Activated CD4-positive, alpha-beta memory T cell treated with anti-CD3 and anti-CD28 coated beads for 36 hours (primary cell): ENCODE measurements at regions of chr5 and their contacts with region 1.

Region 1: DNA sequence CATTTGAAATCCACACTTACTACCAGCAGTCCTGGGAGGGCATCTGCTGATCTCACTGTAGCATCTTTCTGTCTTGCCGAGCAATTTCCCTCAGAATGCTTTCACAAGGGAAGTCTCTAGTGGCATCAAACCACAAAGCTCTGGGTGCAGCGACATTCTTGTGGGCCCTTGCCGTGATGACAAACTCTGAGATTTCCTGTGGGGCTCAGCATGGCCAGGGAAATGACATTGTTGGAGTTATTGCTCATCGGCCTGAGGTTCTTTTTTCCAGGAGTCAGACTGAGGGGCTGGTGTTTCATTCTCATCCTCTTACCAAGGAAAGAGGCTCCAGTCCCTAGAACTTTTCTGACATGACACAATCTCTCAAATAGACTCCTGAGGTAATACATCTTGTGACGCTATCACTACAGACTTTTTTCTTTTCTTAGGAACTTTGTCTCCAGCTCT is 51.4 kb downstream of the PFDN1 start:
- DNase-seq: peak; percentile 90
- H3K4me3 Mint-ChIP-seq: no peak overlapping the region
- H3K27ac Mint-ChIP-seq: peak overlapping the region; percentile 73
- H3K4me1 Mint-ChIP-seq: peaks cover 41% of the 10 kb centered on the region
- H3K27me3 Mint-ChIP-seq: no peaks in the 10 kb centered on the region

Region 2: GRCh38 chr5:140261403-140262171 is 10.0 kb after region 1 on chr5:
- CTCF ChIA-PET with region 1: interaction called, 6 read pairs
- POLR2A ChIA-PET with region 1: interaction called, 7 read pairs
- intact Hi-C with region 1: loop called (anchors 1 kb)
- DNase-seq: peak; percentile 51
- H3K4me3 Mint-ChIP-seq: no peak overlapping the region
- H3K27ac Mint-ChIP-seq: peak overlapping the region; percentile 6
- H3K4me1 Mint-ChIP-seq: peaks cover 62% of the 10 kb centered on the region
- H3K27me3 Mint-ChIP-seq: no peaks in the 10 kb centered on the region

Region 3: DNA sequence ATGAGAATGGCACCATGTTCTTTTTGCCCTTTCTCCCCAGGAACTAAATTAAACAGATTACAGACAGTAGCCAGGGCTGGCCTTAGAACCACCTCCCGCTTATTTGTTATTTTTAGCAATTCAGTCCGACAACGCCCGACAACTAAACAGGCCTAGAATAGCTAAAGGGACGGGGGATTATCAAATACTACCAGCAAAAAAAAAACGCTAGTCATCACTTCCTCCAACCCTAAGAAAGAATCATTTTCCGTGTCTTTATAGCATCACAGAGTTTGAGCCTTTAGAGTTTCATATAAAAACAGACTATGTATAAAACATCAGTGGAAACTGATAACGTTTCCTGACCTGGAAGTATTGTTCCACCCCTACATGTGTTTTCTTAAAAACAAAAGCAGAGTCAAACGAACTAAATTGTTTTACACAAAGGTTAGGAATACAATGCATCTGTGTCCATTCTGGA is 16.0 kb after region 1 on chr5:
- CTCF ChIA-PET with region 1: no interaction called
- POLR2A ChIA-PET with region 1: interaction called, 7 read pairs
- intact Hi-C with region 1: loop called (anchors 2 kb)
- DNase-seq: no peak
- H3K4me3 Mint-ChIP-seq: no peak overlapping the region
- H3K27ac Mint-ChIP-seq: no peak overlapping the region
- H3K4me1 Mint-ChIP-seq: peaks cover 28% of the 10 kb centered on the region
- H3K27me3 Mint-ChIP-seq: no peaks in the 10 kb centered on the region

Region 4: GRCh38 chr5:140302786-140303639 is 51.5 kb after region 1 on chr5 and contains the start of gene PFDN1:
- CTCF ChIA-PET with region 1: no interaction called
- POLR2A ChIA-PET with region 1: no interaction called
- intact Hi-C with region 1: loop called (anchors 1 kb)
- DNase-seq: peak; percentile 95
- H3K4me3 Mint-ChIP-seq: peak within 1 kb of the TSS; percentile 98
- H3K27ac Mint-ChIP-seq: peak within 1 kb of the TSS; percentile 85
- H3K4me1 Mint-ChIP-seq: peaks cover 26% of the 10 kb centered on the region
- H3K27me3 Mint-ChIP-seq: no peaks in the 10 kb centered on the region
- total RNA-seq, gene PFDN1: 50.1 to 54.6 TPM

Region 5: DNA sequence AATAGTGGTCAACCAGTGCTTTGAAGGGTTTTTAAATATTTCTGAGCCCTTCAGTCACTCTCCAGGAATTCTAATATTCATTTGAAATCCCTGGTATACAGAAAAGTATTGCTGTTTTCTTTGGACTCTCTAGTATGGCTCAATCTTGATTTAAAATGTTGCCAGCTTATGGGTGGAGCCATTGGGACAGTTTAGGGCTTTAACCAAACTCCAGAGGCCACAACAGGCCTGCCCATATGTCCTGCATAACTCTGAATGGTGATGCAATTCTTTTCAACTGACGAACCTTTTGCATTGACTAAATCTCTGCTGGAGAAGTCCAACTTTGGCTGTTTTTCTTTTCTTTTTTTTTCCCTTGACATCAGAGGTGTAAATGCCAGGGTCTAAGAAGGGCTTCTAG is 139.8 kb after region 1 on chr5:
- CTCF ChIA-PET with region 1: no interaction called
- POLR2A ChIA-PET with region 1: no interaction called
- intact Hi-C with region 1: no loop called
- DNase-seq: no peak
- H3K4me3 Mint-ChIP-seq: no peak overlapping the region
- H3K27ac Mint-ChIP-seq: no peak overlapping the region
- H3K4me1 Mint-ChIP-seq: no peaks in the 10 kb centered on the region
- H3K27me3 Mint-ChIP-seq: no peaks in the 10 kb centered on the region

Region 6: GRCh38 chr5:140564196-140565023 is 312.9 kb after region 1 on chr5 and contains the starts of genes APBB3 and SLC35A4:
- CTCF ChIA-PET with region 1: no interaction called
- POLR2A ChIA-PET with region 1: no interaction called
- intact Hi-C with region 1: loop called (anchors 5 kb)
- DNase-seq: peak; percentile 98
- H3K4me3 Mint-ChIP-seq: peak within 1 kb of the TSS; percentile 91
- H3K27ac Mint-ChIP-seq: peak within 1 kb of the TSS; percentile 93
- H3K4me1 Mint-ChIP-seq: peaks cover 47% of the 10 kb centered on the region
- H3K27me3 Mint-ChIP-seq: no peaks in the 10 kb centered on the region
- total RNA-seq, gene APBB3: 16.3 to 16.8 TPM
- total RNA-seq, gene SLC35A4: 68.7 to 69.7 TPM